ENCODE measurements at regions of chr5 and their contacts with region 1.

Region 1: DNA sequence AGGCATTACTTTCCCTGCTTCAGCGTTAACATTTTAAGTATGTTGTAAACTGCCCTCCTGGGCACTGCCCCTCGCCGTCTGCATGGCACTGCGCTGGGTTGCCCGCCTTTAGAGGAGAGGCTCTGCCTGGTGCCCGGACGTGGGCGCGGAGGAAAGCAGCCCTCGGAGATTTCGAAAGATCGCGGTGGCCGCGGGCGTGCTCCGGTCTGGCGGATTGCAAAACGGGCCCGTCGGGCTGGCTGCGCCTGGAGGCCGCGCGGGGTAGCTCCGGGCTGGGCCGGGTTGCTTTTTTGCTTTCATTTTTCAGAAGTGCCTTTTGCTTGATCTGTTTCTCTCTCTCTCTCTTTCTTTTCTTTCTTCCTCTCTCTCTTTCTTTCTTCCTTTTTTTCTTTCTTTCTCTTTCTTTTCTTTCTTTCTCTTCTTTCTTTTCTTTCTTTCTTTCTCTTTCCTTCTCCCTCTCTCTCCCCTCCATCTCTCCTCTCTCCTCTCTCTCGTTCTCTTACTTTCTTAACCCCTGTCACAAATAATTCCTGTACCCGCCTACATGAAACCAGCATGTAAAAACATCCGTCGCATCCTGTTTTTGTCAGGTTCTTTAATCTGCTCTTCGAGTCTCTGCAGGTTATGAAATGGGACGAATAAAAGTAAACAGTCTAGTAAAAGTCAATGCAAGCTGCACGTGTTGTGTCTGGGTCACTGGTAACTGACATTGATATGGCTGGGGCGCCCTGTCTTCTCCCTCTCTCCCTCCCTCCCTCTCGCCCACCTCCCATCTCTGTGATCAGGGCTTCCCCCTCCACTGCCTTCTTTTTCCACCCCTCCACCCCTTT is 1.7 kb downstream of the FST start:
- DNase-seq: peak; percentile 28 to 56 (median 34)
- ATAC-seq: peak; percentile 86
- H3K4me3 ChIP-seq: 0 out of 2 replicates have a peak overlapping the region, but pooled peaks have one; percentile 8
- H3K27ac ChIP-seq: no peak overlapping the region
- H3K4me1 ChIP-seq: peaks cover 0 to 30% of the 10 kb centered on the region in 2 experiments; a peak in 2 of 5 replicates
- H3K27me3 ChIP-seq: peaks cover 33 to 38% of the 10 kb centered on the region in 2 experiments
- CTCF ChIP-seq: no peak
- EP300 ChIP-seq: no peak
- POLR2A ChIP-seq: no peak
- RAD21 ChIP-seq: no peak; a peak in 2 of 4 replicates

Region 2: GRCh38 chr5:53469946-53470687 is 12.0 kb before region 1 on chr5:
- CTCF ChIA-PET with region 1: no interaction called
- POLR2A ChIA-PET with region 1: no interaction called
- in situ Hi-C with region 1: no loop called
- intact Hi-C with region 1: no loop called
- DNase-seq: no peak
- ATAC-seq: no peak
- H3K4me3 ChIP-seq: no peak overlapping the region
- H3K27ac ChIP-seq: no peak overlapping the region
- H3K4me1 ChIP-seq: no peaks in the 10 kb centered on the region
- H3K27me3 ChIP-seq: no peaks in the 10 kb centered on the region; a peak in 1 of 5 replicates
- CTCF ChIP-seq: no peak
- EP300 ChIP-seq: no peak
- POLR2A ChIP-seq: no peak
- RAD21 ChIP-seq: no peak

Region 3: GRCh38 chr5:53607886-53608285 is 125.8 kb after region 1 on chr5:
- CTCF ChIA-PET with region 1: no interaction called
- POLR2A ChIA-PET with region 1: no interaction called
- in situ Hi-C with region 1: no loop called
- intact Hi-C with region 1: no loop called
- DNase-seq: no peak
- ATAC-seq: no peak
- H3K4me3 ChIP-seq: no peak overlapping the region
- H3K27ac ChIP-seq: no peak overlapping the region
- H3K4me1 ChIP-seq: no peaks in the 10 kb centered on the region
- H3K27me3 ChIP-seq: no peaks in the 10 kb centered on the region
- CTCF ChIP-seq: no peak
- EP300 ChIP-seq: no peak
- POLR2A ChIP-seq: no peak
- RAD21 ChIP-seq: no peak

Region 4: GRCh38 chr5:53874409-53874808 is 392.3 kb after region 1 on chr5:
- CTCF ChIA-PET with region 1: no interaction called
- POLR2A ChIA-PET with region 1: no interaction called
- in situ Hi-C with region 1: no loop called
- intact Hi-C with region 1: loop called (anchors 1 kb)
- DNase-seq: peak in 2 of 4 experiments; percentile 20 to 22
- ATAC-seq: peak; percentile 82
- H3K4me3 ChIP-seq: no peak overlapping the region
- H3K27ac ChIP-seq: no peak overlapping the region
- H3K4me1 ChIP-seq: no peaks in the 10 kb centered on the region
- H3K27me3 ChIP-seq: no peaks in the 10 kb centered on the region
- CTCF ChIP-seq: peak in 2 of 3 experiments; percentile 9 to 14; a peak in 2 of 6 replicates
- EP300 ChIP-seq: no peak
- POLR2A ChIP-seq: peak; percentile 35; the same call in 1 of the 2 replicates
- RAD21 ChIP-seq: peak in 1 of 2 experiments; percentile 40; a peak in 2 of 4 replicates

Region 5: DNA sequence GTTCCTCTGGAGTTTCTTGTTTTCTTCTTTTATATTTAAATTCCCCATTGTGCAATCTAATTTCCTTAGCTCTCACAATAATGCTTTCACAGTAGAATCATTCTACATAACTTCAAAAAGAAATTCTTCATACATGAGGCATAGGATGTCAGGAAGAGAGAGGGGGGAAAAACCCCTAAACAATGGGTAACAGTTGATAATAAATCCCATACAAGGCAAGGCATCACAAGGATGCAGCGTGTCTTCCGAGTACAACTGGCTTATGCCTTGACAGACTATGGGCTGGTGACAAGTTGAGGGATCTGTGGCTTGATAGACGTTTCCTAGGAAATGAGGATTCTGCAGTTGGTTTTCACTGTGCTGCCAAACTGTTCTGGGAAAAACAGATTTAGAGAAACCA is 580.9 kb after region 1 on chr5:
- CTCF ChIA-PET with region 1: interaction called, 3 read pairs
- POLR2A ChIA-PET with region 1: no interaction called
- in situ Hi-C with region 1: no loop called
- intact Hi-C with region 1: loop called (anchors 5 kb)
- DNase-seq: no peak
- ATAC-seq: no peak
- H3K4me3 ChIP-seq: no peak overlapping the region
- H3K27ac ChIP-seq: no peak overlapping the region
- H3K4me1 ChIP-seq: no peaks in the 10 kb centered on the region
- H3K27me3 ChIP-seq: no peaks in the 10 kb centered on the region
- CTCF ChIP-seq: no peak
- EP300 ChIP-seq: no peak
- POLR2A ChIP-seq: no peak
- RAD21 ChIP-seq: no peak

Region 6: DNA sequence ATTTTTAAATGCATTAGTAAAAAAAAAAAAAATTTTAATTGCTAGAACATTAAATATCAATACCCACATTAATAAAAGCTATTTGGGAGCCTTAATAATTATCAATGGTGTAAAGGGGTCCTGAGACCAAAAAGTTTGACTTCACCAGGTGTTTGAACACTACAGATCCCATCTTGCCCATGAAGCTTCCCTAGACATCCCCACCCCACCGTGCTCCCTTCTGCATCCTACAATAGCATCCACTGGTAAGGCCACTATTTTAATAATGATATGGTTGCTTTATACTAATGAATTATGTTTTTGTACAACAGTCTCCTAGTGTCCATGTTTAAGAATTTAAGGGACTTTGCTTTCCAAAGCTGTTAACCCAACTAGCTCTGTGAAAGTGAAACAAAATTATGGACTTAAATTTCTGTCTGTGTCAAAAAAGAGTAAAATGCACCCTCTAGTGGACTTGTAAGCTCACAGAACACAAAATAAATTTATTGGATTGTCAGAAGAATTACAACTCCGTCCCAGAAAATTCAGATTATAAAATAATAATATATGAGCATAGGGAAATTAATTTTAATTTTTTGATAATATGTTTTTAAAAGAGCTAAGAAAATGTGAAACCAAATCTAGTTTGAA is 752.3 kb after region 1 on chr5:
- CTCF ChIA-PET with region 1: no interaction called
- POLR2A ChIA-PET with region 1: no interaction called
- in situ Hi-C with region 1: no loop called
- intact Hi-C with region 1: loop called (anchors 5 kb)
- DNase-seq: no peak
- ATAC-seq: no peak
- H3K4me3 ChIP-seq: no peak overlapping the region
- H3K27ac ChIP-seq: no peak overlapping the region
- H3K4me1 ChIP-seq: no peaks in the 10 kb centered on the region
- H3K27me3 ChIP-seq: no peaks in the 10 kb centered on the region
- CTCF ChIP-seq: peak in 1 of 3 experiments; percentile 45; a peak in 2 of 6 replicates
- EP300 ChIP-seq: no peak
- POLR2A ChIP-seq: no peak
- RAD21 ChIP-seq: peak in 1 of 2 experiments; percentile 21; a peak in 2 of 4 replicates